ENCODE measurements at regions of chr15 and their contacts with region 1.

Region 1: GRCh38 chr15:89358755-89359439 is 24.3 kb upstream of the POLG start:
- DNase-seq: peak; percentile 72
- H3K4me3 Mint-ChIP-seq: peak overlapping the region; percentile 78
- H3K27ac Mint-ChIP-seq: no peak overlapping the region
- H3K4me1 Mint-ChIP-seq: no peaks in the 10 kb centered on the region
- H3K27me3 Mint-ChIP-seq: peaks cover 88% of the 10 kb centered on the region
- CTCF ChIP-seq: peak; percentile 92

Region 2: GRCh38 chr15:88932271-88932874 is 426.5 kb before region 1 on chr15:
- CTCF ChIA-PET with region 1: no interaction called
- POLR2A ChIA-PET with region 1: no interaction called
- intact Hi-C with region 1: no loop called
- DNase-seq: no peak
- H3K4me3 Mint-ChIP-seq: no peak overlapping the region
- H3K27ac Mint-ChIP-seq: no peak overlapping the region
- H3K4me1 Mint-ChIP-seq: peaks cover 5% of the 10 kb centered on the region
- H3K27me3 Mint-ChIP-seq: no peaks in the 10 kb centered on the region
- CTCF ChIP-seq: no peak

Region 3: GRCh38 chr15:89334510-89335288 is 24.2 kb before region 1 on chr15 and contains the start of gene POLG:
- CTCF ChIA-PET with region 1: interaction called, 144 read pairs
- POLR2A ChIA-PET with region 1: interaction called, 3 read pairs
- intact Hi-C with region 1: no loop called
- DNase-seq: peak; percentile 99
- H3K4me3 Mint-ChIP-seq: peak within 1 kb of the TSS; percentile 76
- H3K27ac Mint-ChIP-seq: peak within 1 kb of the TSS; percentile 68
- H3K4me1 Mint-ChIP-seq: peaks cover 22% of the 10 kb centered on the region
- H3K27me3 Mint-ChIP-seq: no peaks in the 10 kb centered on the region
- CTCF ChIP-seq: no peak
- total RNA-seq, gene POLG: 52.9 and 62.2 TPM in 2 replicates

Region 4: GRCh38 chr15:89399238-89400120 is 40.6 kb after region 1 on chr15:
- CTCF ChIA-PET with region 1: interaction called, 90 read pairs
- POLR2A ChIA-PET with region 1: interaction called, 5 read pairs
- intact Hi-C with region 1: no loop called
- DNase-seq: no peak
- H3K4me3 Mint-ChIP-seq: no peak overlapping the region
- H3K27ac Mint-ChIP-seq: no peak overlapping the region
- H3K4me1 Mint-ChIP-seq: peaks cover 26% of the 10 kb centered on the region
- H3K27me3 Mint-ChIP-seq: no peaks in the 10 kb centered on the region
- CTCF ChIP-seq: peak; percentile 13

Region 5: DNA sequence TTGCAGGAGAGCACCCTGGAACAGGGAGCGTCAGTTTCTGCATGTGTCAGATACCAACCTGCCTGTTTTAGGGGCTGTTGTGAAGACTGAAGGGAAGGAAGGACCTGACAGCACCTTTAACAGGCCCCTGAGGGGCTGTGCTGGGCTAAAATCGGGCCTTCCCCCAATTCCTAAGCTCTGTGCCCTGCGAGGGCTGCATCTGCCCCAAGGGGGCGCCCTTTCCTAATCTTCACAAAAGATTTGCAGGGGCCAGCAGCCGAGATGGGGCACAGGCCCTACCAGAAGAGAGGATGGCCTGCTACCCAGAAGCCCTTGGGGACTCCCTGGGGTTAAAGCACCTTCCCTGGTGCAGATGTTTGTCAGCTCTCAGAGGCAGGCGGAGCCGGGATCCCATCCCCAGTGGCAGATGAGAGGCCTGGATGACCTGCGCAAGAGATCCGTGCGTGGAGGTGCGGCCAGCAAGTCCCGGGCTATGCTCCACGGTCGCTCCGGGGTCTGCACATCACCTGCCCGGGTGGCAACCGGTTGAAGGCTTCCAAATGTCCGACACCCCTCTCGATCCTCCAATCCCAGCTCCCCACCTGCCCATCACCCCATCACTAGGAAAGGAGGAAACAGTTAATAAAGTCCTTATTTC is 83.9 kb after region 1 on chr15:
- CTCF ChIA-PET with region 1: interaction called, 91 read pairs
- POLR2A ChIA-PET with region 1: no interaction called
- intact Hi-C with region 1: no loop called
- DNase-seq: peak; percentile 70
- H3K4me3 Mint-ChIP-seq: no peak overlapping the region
- H3K27ac Mint-ChIP-seq: no peak overlapping the region
- H3K4me1 Mint-ChIP-seq: no peaks in the 10 kb centered on the region
- H3K27me3 Mint-ChIP-seq: peaks cover 25% of the 10 kb centered on the region
- CTCF ChIP-seq: peak; percentile 75

Region 6: DNA sequence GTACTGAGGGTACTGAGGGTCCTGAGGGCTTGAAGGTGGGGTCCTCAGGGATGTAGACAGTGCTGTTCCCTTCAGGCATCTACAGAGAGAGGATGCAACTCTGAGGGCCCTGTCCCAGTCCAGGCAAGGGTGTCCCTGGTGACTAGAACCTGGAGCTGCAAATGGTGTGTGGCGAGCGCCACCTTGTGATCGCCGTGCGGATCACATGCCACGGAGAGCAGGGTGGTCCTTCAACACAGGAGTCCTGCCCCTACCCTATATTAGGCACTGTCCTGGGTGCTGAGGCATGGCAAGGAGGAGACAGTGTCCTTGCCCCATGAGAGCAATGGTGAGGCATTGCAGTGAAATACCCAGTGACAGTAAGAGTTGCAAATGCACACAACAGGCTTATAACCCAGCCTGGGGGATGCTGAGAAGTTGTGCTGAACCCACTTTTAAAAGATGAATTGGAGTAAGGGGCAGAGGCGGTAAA is 113.9 kb after region 1 on chr15:
- CTCF ChIA-PET with region 1: interaction called, 76 read pairs
- POLR2A ChIA-PET with region 1: interaction called, 3 read pairs
- intact Hi-C with region 1: loop called (anchors 1 kb)
- DNase-seq: peak; percentile 67
- H3K4me3 Mint-ChIP-seq: no peak overlapping the region
- H3K27ac Mint-ChIP-seq: no peak overlapping the region
- H3K4me1 Mint-ChIP-seq: no peaks in the 10 kb centered on the region
- H3K27me3 Mint-ChIP-seq: peaks cover 46% of the 10 kb centered on the region
- CTCF ChIP-seq: peak; percentile 88

Region 7: DNA sequence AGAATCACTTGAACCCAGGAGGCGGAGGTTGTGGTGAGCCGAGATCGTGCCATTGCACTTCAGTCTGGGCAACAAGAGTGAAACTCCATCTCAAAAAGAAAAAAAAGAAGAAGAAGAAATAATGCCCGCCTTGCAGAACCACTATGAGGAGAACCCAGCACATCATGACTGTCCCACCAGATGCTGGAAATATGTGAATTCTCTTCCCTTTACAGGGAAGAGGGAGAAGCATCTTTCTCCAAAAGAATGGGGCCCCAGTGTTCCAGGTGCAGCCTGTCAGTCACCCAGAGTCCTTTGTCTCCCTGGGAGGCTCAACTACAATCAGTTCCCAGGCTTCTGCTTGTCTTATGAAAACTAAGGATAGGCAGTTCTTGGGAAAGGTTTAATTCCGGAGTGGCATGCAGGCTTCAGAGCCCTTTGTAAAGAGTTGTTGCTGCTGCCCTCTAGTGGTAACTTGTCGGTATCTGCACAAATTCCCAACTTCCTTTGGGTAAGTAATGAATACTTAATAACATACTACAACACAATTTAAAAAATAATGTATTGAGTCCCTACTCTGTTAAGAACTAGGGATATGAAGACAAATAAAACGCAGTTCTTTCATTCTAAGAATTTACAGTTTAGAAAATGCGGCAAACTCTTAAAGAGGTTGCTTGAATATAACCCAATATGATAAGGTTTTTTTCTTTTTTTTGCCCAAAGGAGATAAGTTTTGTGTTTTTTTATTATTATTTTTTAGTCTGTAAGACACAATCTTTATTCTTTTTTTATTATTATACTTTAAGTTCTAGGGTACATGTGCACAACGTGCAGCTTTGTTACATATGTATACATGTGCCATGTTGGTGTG is 197.7 kb after region 1 on chr15:
- CTCF ChIA-PET with region 1: interaction called, 31 read pairs
- POLR2A ChIA-PET with region 1: no interaction called
- intact Hi-C with region 1: loop called (anchors 2 kb)
- DNase-seq: peak; percentile 85
- H3K4me3 Mint-ChIP-seq: no peak overlapping the region
- H3K27ac Mint-ChIP-seq: no peak overlapping the region
- H3K4me1 Mint-ChIP-seq: no peaks in the 10 kb centered on the region
- H3K27me3 Mint-ChIP-seq: no peaks in the 10 kb centered on the region
- CTCF ChIP-seq: peak; percentile 77

Region 8: DNA sequence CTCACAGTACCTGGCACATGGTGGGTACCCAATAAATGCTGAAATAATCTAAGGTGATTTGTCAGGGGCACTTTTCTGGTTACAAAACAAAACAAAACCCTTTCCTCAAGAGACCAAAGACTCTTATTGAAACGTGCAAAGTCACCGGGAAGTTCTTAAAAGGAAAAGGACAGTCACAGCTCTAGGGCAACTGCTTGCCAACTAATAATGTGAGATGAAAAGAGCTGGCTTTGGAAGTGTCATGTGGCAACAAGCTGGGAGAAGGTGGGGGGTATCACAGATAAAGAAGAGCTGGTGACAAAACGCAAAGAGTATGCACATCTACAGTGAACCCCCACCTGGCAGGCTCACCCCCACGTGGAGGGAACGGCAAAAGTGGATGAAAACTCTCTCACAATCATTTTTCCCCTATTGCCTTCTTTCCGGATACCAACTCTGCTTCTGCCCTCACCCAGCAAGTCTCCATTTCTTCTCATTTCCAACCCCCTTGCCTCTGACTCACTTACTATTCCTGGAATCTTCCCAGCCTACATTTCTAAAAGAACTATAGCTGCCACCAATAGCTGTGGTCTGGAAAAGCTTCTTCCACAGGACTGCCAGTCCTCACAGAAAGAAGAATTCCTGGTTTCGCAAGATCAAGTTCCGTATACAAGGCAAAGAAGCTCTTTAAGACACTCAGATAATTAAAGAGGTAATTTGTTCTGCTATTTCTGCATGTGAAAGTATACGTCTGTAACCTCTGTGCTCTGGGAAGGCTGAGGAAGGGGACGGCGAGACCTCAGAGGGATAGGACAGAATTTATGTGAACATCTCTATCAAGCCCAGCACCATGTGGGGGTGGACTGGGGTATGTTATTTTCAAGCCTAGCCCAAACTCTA is 477.6 kb after region 1 on chr15:
- CTCF ChIA-PET with region 1: no interaction called
- POLR2A ChIA-PET with region 1: no interaction called
- intact Hi-C with region 1: no loop called
- DNase-seq: peak; percentile 94
- H3K4me3 Mint-ChIP-seq: peak overlapping the region; percentile 63
- H3K27ac Mint-ChIP-seq: peak overlapping the region; percentile 98
- H3K4me1 Mint-ChIP-seq: peaks cover 35% of the 10 kb centered on the region
- H3K27me3 Mint-ChIP-seq: no peaks in the 10 kb centered on the region
- CTCF ChIP-seq: no peak